ENCODE measurements at regions of chr3 and their contacts with region 1.

Region 1: DNA sequence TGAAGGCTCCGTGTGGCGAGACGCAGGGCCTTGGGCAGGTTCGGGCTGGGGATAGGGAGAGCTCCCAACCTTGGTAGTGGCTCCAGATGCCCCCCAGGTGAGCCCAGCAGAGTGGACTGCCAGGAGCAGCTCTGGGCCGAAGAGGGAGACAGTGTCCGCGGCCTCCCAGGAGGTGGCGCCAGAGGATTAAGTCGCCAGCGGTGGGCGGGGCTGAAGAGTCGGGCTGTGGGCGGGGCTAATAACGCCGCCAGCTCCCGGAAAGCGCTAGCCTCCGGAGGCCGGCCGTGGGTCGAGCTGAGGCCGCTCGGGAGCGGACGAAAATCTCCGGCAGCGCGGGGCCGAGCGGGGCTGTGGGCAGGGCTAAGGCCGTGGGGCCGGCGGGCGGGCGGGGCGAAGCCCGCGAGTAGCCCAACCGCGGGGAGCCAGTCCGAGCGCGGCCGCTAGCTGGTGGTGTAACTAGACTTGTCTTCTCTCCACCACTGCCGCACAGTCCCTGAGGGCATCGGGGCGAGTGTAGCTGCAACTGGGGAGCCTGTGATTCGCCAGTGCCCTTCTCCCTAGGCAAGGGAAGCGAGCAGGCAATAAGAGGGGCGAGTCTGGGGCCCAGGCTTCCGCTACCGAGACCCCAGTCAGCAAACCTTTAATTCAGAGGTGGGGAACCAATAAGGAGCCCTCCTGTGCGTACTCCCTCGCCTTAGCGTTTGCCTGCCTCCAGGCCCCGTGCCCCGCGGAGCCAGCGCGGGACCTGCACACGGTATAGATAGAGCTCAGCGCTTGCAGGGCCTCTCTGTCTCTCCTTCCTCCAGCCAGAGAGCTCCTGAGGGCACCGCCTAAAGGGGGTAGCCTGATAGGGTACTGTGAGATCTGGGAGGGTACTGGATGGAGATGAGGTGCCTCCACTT is 14.4 kb upstream of the BSN start:
- DNase-seq: peak; percentile 94 to 96
- H3K4me3 ChIP-seq: peak overlapping the region; percentile 49
- H3K4me3 Mint-ChIP-seq: peak overlapping the region; percentile 71
- H3K27ac Mint-ChIP-seq: peak overlapping the region; percentile 69
- H3K4me1 ChIP-seq: no peaks in the 10 kb centered on the region
- H3K4me1 Mint-ChIP-seq: no peaks in the 10 kb centered on the region
- H3K27me3 ChIP-seq: no peaks in the 10 kb centered on the region
- H3K27me3 Mint-ChIP-seq: peaks cover 9% of the 10 kb centered on the region
- CTCF ChIP-seq: peak; percentile 81 to 92

Region 2: DNA sequence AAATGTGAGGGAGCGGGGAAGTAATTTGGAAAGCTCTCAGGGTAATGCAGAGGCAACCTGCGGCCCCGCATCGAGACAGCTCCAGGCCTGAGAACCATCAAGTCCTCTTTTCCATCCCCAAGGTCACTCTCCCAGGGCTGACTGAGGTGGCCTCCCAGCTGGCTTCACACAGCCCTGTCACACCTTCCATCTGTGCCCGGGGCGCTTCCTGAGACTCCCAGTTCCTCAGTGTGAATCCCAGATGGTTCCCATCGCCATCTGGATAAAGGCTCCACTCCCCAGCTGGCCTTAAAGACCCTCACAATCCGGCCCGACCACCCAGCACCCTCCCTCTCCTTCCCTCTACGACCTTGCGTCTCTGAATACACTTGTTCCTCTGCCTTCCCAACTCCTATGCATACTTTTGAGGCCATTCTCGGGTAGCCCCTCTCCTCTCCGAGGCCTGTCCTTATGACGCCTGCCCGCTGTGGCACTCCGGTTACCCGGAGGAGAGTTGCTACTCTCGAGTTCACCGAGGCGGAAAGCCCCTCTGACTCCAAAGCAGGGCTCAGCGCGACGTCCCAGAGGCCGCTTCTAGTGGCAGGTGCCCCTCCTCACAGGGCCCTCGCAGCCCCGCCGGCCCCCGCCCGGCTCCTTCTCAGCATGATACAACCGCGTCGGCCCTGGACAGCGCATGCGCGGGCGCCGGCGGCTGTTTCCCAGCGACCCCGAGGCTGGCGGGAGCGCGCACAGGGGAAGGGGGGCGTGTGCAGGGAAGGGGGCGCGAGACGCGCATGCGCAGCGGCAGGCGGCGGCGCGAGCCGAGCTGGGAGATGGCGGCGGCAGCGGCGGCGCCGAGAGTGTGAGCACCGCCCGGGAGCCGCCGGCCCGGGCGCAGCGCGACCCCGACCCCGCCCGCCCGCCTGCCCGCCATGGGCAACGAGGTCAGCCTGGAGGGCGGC is 14.1 kb after region 1 on chr3 and contains the start of gene BSN:
- CTCF ChIA-PET with region 1: interaction called, 31 read pairs
- POLR2A ChIA-PET with region 1: no interaction called
- intact Hi-C with region 1: loop called (anchors 1 kb)
- DNase-seq: peak; percentile 91 to 95
- H3K4me3 ChIP-seq: peak within 1 kb of the TSS; percentile 68
- H3K4me3 Mint-ChIP-seq: peak within 1 kb of the TSS; percentile 84
- H3K27ac Mint-ChIP-seq: peak within 1 kb of the TSS; percentile 76
- H3K4me1 ChIP-seq: peaks cover 15% of the 10 kb centered on the region; the same call in 1 of the 2 replicates
- H3K4me1 Mint-ChIP-seq: no peaks in the 10 kb centered on the region
- H3K27me3 ChIP-seq: no peaks in the 10 kb centered on the region
- H3K27me3 Mint-ChIP-seq: peaks cover 3% of the 10 kb centered on the region
- CTCF ChIP-seq: no peak
- total RNA-seq, gene BSN: 0.77 and 0.93 TPM in 2 replicates

Region 3: GRCh38 chr3:49593041-49593440 is 53.1 kb after region 1 on chr3:
- CTCF ChIA-PET with region 1: no interaction called
- POLR2A ChIA-PET with region 1: no interaction called
- intact Hi-C with region 1: loop called (anchors 5 kb)
- DNase-seq: no peak
- H3K4me3 ChIP-seq: no peak overlapping the region
- H3K4me3 Mint-ChIP-seq: no peak overlapping the region
- H3K27ac Mint-ChIP-seq: no peak overlapping the region
- H3K4me1 ChIP-seq: no peaks in the 10 kb centered on the region
- H3K4me1 Mint-ChIP-seq: no peaks in the 10 kb centered on the region
- H3K27me3 ChIP-seq: no peaks in the 10 kb centered on the region
- H3K27me3 Mint-ChIP-seq: no peaks in the 10 kb centered on the region
- CTCF ChIP-seq: no peak

Region 4: DNA sequence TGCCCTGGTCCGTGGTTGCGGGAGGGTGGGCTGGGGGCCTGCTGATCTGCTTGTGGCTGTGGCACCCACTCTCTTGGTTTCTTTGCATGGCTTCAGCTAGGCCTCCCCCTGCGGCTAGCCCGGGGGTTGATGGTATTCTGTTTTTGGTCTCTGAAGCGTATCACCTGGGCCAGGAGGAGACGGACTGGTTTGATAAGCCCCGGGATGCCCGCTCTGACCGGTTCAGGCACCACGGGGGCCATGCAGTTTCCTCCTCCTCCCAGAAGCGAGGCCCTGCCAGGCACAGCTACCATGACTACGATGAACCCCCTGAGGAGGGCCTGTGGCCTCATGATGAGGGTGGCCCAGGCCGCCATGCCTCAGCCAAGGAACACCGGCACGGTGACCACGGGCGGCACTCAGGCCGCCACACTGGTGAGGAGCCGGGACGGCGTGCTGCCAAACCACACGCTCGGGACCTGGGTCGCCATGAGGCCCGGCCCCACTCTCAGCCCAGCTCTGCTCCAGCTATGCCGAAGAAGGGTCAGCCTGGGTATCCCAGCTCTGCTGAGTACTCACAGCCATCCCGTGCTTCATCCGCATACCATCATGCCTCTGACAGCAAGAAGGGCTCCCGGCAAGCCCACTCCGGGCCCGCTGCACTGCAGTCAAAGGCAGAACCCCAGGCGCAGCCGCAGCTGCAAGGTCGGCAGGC is 123.0 kb after region 1 on chr3:
- CTCF ChIA-PET with region 1: interaction called, 15 read pairs
- POLR2A ChIA-PET with region 1: no interaction called
- intact Hi-C with region 1: no loop called
- DNase-seq: no peak
- H3K4me3 ChIP-seq: no peak overlapping the region
- H3K4me3 Mint-ChIP-seq: no peak overlapping the region
- H3K27ac Mint-ChIP-seq: no peak overlapping the region
- H3K4me1 ChIP-seq: peaks cover 15% of the 10 kb centered on the region; the same call in 1 of the 2 replicates
- H3K4me1 Mint-ChIP-seq: peaks cover 15% of the 10 kb centered on the region
- H3K27me3 ChIP-seq: no peaks in the 10 kb centered on the region
- H3K27me3 Mint-ChIP-seq: no peaks in the 10 kb centered on the region
- CTCF ChIP-seq: no peak

Region 5: GRCh38 chr3:49668414-49668797 is 128.5 kb after region 1 on chr3:
- CTCF ChIA-PET with region 1: interaction called, 73 read pairs
- POLR2A ChIA-PET with region 1: interaction called, 14 read pairs
- intact Hi-C with region 1: loop called (anchors 1 kb)
- DNase-seq: peak; percentile 43 to 59
- H3K4me3 ChIP-seq: no peak overlapping the region
- H3K4me3 Mint-ChIP-seq: no peak overlapping the region
- H3K27ac Mint-ChIP-seq: no peak overlapping the region
- H3K4me1 ChIP-seq: peaks cover 28% of the 10 kb centered on the region
- H3K4me1 Mint-ChIP-seq: peaks cover 35% of the 10 kb centered on the region
- H3K27me3 ChIP-seq: no peaks in the 10 kb centered on the region
- H3K27me3 Mint-ChIP-seq: no peaks in the 10 kb centered on the region
- CTCF ChIP-seq: no peak

Region 6: DNA sequence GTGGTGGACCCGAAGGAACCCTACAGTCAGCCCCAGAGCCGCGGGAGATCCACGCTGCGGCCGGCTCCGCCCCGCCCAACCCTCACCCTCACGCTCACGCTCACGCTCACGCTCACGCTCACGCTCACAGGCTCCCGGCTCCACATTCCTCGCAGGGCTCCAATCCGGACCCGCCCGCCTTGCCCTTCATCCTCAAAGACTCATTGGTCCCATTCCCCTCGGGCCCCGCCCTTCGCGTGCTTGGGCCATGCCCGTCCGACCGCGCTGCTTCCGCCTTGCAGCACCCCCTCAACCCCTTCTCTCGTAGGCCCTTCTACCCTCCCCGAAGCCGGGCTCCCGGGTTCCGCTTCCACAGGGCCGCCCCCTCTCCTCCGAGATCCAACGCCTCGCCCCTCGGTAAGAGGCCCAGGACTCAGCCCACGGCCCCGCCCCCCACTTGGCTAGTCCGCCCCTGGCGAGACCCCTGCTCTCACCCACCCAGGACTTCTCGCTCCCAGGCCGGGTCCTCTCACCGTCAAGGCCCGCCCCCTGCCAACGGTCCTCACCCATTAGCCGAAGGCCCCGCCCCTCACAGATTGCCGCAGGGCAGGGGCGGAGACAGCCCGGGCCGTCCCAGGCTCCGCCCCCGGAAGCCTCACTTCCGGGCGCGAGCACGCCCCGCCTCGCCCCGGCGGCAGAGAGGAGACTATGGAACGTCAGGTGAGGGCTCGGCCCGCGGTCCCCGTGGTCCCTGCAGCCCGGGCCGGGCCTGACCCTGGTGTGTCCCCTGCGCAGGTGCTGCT is 134.0 kb after region 1 on chr3 and contains the start of gene APEH:
- CTCF ChIA-PET with region 1: interaction called, 73 read pairs
- POLR2A ChIA-PET with region 1: interaction called, 14 read pairs
- intact Hi-C with region 1: loop called (anchors 1 kb)
- DNase-seq: peak; percentile 99
- H3K4me3 ChIP-seq: peak within 1 kb of the TSS; percentile 75
- H3K4me3 Mint-ChIP-seq: peak within 1 kb of the TSS; percentile 93
- H3K27ac Mint-ChIP-seq: peak within 1 kb of the TSS; percentile 96
- H3K4me1 ChIP-seq: peaks cover 7% of the 10 kb centered on the region; the same call in 1 of the 2 replicates
- H3K4me1 Mint-ChIP-seq: peaks cover 11% of the 10 kb centered on the region
- H3K27me3 ChIP-seq: no peaks in the 10 kb centered on the region
- H3K27me3 Mint-ChIP-seq: no peaks in the 10 kb centered on the region
- CTCF ChIP-seq: no peak
- total RNA-seq, gene APEH: 236 and 279 TPM in 2 replicates